BJ (cell line): ENCODE measurements at regions of chr19 and their contacts with region 1.

Region 1: DNA sequence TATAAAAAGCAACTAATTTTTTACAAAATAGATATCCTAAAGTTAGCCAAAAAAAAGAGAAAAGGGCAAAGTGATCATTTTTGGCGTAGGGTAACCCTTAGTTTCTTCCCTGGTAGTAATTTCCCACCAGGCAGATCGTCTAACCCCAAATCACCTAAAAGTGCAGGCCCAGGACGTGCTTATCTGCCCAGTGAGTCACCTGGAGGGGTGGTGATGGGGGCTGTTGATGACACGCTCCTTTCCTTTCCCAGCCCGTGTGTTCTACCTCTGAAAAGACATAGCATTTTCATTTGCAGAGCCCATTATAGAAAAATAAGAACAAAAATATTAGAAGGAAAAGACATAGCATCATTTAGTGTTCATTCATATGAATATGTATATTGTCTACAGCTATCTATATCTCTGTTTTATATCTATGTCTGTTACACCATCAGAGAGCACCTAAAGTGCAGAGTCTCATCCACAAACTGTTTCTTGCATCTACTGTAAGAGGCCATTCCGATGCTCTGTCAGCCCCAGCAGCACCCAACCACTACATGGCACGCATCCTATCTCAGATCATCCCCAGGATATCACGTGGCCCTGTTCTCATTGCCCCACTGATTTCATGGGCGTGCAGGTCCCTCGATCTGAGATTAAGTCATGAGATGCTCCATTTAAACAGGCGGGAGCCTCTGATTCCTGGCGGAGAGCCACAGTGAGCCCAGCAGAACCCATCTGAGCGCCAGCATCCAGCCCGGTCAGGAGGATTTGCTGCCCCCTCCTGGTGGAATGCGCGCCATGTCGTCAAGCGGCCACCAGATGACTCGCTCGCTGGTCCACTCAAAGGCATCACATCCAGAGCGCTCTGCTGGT is 8.5 kb upstream of the LILRB3 start:
- DNase-seq: peak; percentile 4
- H3K4me3 ChIP-seq: no peak overlapping the region
- H3K27me3 ChIP-seq: no peaks in the 10 kb centered on the region; the same call in none of the 2 replicates
- CTCF ChIP-seq: peak; percentile 95

Region 2: DNA sequence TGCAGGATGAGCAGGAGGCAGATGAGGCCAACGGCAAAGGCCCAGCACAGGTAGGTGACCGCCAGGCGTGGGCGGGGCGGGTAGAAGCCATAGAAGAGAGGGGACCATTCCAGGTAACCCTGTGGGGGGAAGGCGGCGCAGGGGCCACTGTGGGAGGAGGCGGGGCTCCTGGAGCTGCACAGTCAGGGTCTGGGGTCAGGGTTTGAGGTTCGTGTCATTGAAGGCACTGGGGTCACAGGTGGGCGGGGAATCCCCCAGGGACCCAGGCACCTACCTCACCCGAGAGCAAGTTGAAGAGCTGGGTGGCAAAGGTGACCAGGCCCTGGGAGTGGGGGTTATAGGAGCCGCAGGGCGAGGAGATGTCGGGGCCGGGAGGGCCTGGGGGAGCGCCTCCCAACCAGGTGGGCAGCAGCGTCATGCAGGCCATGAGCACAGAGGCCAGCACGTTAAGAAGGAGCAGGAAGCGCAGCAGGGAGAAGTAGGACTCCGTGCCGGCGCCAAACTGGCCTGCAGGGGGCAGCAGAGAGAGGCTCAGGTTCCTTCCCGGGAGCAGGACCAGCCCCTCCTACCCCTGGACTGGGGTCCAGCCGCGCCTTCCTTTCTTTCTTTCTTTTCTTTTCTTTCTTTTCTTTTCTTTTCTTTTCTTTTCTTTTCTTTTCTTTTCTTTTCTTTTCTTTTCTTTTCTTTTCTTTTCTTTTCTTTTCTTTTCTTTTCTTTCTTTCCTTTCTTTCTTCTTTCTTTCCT is 63.0 kb before region 1 on chr19:
- CTCF ChIA-PET with region 1: interaction called, 12 read pairs
- POLR2A ChIA-PET with region 1: no interaction called
- DNase-seq: no peak
- H3K4me3 ChIP-seq: no peak overlapping the region
- H3K27me3 ChIP-seq: no peaks in the 10 kb centered on the region
- CTCF ChIP-seq: peak; percentile 91

Region 3: DNA sequence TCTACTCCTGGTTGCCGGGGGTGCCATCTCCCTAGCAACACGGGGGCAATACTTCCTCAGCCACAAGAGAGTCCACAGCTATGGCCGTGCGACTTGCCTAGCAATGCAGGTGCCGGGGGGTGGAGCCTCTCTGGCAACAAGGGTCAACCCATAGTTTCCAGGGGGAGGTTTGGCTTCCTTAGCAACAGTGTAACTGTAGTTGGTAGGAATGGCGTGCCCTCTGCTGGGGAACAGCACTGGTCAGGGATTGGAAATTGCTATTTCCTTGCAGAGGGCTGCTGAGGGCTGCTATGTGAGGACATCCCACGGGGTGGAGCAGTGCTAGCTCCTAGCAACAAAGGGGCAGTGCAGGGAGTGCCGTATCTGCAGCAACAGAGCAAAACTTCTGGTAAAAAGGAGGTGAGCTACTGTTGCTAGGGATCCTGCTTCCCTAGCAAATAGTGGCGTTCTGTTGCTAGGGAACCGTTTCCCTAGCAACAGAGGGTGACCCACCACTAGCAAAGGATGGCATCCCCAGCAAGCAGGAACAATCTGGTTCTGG is 51.3 kb before region 1 on chr19:
- CTCF ChIA-PET with region 1: interaction called, 10 read pairs
- POLR2A ChIA-PET with region 1: no interaction called
- DNase-seq: no peak
- H3K4me3 ChIP-seq: no peak overlapping the region
- H3K27me3 ChIP-seq: no peaks in the 10 kb centered on the region
- CTCF ChIP-seq: peak; percentile 37; the same call in 1 of the 2 replicates

Region 4: DNA sequence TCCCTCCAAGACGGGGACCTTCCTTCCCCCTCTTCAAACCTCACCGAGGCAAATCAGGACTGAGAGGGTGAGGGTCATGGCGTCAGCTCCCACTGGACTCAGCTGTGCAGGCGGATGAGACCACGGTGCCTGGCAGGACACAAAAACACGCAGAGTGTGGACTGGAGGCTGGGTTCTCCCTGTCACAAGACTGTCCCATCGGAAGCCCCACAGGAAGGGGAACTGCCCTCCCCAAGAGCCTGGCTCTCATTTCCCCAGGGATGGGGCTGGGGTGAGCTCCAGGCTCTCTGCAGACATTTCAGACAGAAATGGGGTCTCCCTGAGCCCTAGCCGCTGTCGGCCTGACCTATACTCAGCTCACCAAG is 25.8 kb after region 1 on chr19 and contains the start of gene LILRB5:
- CTCF ChIA-PET with region 1: no interaction called
- POLR2A ChIA-PET with region 1: no interaction called
- DNase-seq: no peak
- H3K4me3 ChIP-seq: no peak within 1 kb of the TSS
- H3K27me3 ChIP-seq: peaks cover 6% of the 10 kb centered on the region
- CTCF ChIP-seq: no peak
- polyA plus RNA-seq, gene LILRB5: not detected in 2 replicates